Mammary epithelial cell (primary cell): ENCODE measurements at regions of chrX and their contacts with region 1.

Region 1: DNA sequence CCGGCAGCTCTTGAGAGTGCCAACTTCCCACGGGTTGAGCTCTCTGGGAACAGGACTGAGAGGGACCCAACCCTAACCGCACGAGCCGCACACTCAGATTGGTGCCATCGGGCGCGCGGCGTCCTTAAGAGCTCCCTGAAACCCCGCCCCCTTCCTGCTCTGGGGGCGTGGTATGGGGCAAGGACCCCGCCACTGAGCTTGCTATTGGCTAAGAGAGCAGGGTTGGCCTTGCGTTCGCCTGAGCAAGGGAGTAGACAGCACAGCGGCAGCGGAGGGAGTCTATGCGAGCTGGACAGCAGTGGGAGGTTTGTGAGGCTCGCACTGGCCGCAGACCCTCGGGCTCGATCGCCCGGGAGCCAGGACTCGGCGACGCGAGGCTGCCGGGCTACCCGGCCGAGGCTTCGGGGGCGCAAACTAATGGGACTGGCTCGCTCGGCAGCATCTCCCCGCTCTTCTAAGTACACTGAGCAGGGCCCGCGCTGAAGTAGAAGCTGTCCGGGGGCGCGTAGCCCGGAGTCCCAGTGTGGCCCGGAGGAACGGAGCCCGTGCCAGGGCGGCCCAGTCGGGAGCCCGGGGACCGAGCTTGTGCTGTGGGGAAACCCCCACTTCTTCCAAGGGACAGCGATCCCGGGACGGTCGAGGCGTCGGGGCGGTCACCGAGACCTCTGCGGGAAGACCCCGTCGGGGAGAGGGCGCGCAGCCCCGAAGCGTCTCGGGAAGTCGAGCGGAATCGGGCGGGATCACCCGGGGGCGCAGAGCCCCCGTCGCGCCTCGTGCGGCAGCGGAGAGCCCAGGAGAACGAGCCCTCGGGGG is at the start of gene EFNB1:
- DNase-seq: peak; percentile 90
- H3K4me3 ChIP-seq: peak within 1 kb of the TSS; percentile 66 to 74 (median 74)
- H3K27ac ChIP-seq: peak within 1 kb of the TSS; percentile 81
- H3K4me1 ChIP-seq: peaks cover 5% of the 10 kb centered on the region
- H3K27me3 ChIP-seq: no peaks in the 10 kb centered on the region
- CTCF ChIP-seq: no peak
- total RNA-seq, gene EFNB1: 143 to 167 TPM

Region 2: GRCh38 chrX:68681443-68681941 is 147.5 kb before region 1 on chrX:
- CTCF ChIA-PET with region 1: no interaction called
- dilution Hi-C with region 1: no loop called
- in situ Hi-C with region 1: no loop called
- intact Hi-C with region 1: no loop called
- DNase-seq: peak; percentile 9
- H3K4me3 ChIP-seq: no peak overlapping the region
- H3K27ac ChIP-seq: no peak overlapping the region
- H3K4me1 ChIP-seq: peaks cover 3% of the 10 kb centered on the region
- H3K27me3 ChIP-seq: no peaks in the 10 kb centered on the region
- CTCF ChIP-seq: no peak

Region 3: GRCh38 chrX:68894513-68895340 is 65.8 kb after region 1 on chrX:
- CTCF ChIA-PET with region 1: no interaction called
- dilution Hi-C with region 1: no loop called
- in situ Hi-C with region 1: no loop called
- intact Hi-C with region 1: loop called (anchors 2 kb)
- DNase-seq: peak; percentile 33
- H3K4me3 ChIP-seq: no peak overlapping the region
- H3K27ac ChIP-seq: peak overlapping the region; percentile 37
- H3K4me1 ChIP-seq: peaks cover 18% of the 10 kb centered on the region
- H3K27me3 ChIP-seq: no peaks in the 10 kb centered on the region
- CTCF ChIP-seq: no peak

Region 4: DNA sequence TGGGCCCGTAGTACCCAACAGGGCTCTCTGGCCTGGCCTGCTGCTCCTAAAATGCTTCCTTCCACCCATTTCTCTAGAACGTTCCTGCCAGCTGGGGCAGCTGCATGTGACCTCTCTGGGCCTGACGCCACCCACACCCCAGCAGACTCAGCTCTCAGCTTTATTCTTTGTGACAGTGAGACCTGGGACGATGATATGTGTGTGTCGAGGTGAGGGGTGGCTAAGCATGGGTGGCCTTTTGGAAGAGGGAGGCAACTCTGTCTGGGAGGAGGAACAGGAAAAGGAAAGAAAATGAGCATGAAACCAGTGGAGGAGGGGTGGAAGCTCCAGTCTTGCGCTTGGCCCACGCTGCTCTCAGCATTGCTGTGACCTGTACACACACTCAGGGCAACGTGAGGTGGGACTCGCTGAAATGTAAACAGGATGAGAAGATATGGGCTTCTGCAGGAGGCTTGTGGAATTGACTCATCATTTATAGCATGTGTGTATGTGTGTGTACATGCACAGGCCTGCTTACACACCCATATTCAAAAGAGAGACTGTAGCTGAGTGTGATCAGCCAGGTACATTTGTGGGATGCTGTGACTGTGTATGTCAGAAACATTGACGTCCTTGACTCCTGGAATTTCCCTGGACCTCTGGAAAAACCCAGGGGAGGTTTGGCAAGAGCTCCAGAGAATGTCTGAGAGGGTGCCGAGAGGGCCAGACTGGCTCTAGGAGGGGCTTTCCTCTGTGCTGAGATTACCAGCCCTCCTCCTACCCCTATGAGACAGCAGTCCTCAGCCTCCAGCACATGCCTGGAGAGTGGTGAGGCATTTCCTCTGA is 198.4 kb after region 1 on chrX:
- CTCF ChIA-PET with region 1: interaction called, 8 read pairs
- dilution Hi-C with region 1: no loop called
- in situ Hi-C with region 1: loop called (anchors 5 to 10 kb)
- intact Hi-C with region 1: loop called (anchors 1 kb)
- DNase-seq: peak; percentile 97
- H3K4me3 ChIP-seq: no peak overlapping the region
- H3K27ac ChIP-seq: peak overlapping the region; percentile 96
- H3K4me1 ChIP-seq: peaks cover 53% of the 10 kb centered on the region
- H3K27me3 ChIP-seq: no peaks in the 10 kb centered on the region
- CTCF ChIP-seq: no peak

Region 5: DNA sequence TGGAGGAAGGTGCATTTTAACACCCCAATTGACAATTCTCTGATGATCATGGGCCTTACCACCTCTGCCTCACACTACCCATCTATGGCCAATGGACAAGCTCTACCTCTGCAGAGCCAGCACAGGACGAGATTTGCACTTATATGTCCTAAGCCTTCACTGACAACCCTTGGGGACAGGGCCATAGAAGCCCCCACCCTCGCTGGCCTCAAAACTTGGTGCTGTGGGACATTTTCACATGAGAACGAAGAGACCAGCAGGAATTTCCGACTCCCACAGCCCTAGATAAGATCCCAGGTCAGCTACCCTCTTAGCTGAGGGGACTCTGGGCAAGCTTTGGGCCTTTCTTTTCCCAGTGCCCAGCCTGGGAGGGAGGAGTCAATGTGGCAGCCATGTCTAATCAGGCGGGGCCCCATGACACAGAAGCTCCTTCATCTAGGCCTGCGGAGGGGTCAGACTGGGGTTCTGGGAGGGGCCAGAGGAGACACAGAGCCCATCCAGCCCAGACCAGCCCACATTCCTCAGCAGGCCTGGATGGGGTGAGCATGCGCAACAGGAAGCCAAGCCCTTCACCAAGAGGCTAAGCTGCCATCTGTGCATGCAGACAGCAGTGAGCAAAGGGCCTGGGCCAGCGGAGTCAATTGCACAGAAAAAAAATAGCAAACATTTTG is 324.2 kb after region 1 on chrX:
- CTCF ChIA-PET with region 1: interaction called, 8 read pairs
- dilution Hi-C with region 1: no loop called
- in situ Hi-C with region 1: loop called in 1 of 2 experiments (anchors 25 kb)
- intact Hi-C with region 1: loop called (anchors 5 kb)
- DNase-seq: no peak
- H3K4me3 ChIP-seq: no peak overlapping the region
- H3K27ac ChIP-seq: no peak overlapping the region
- H3K4me1 ChIP-seq: peaks cover 21% of the 10 kb centered on the region
- H3K27me3 ChIP-seq: no peaks in the 10 kb centered on the region
- CTCF ChIP-seq: no peak

Region 6: GRCh38 chrX:69229436-69229835 is 400.5 kb after region 1 on chrX:
- CTCF ChIA-PET with region 1: no interaction called
- dilution Hi-C with region 1: no loop called
- in situ Hi-C with region 1: loop called in 1 of 2 experiments (anchors 5 kb)
- intact Hi-C with region 1: no loop called
- DNase-seq: peak; percentile 69
- H3K4me3 ChIP-seq: no peak overlapping the region
- H3K27ac ChIP-seq: no peak overlapping the region
- H3K4me1 ChIP-seq: peaks cover 6% of the 10 kb centered on the region
- H3K27me3 ChIP-seq: no peaks in the 10 kb centered on the region
- CTCF ChIP-seq: no peak

Region 7: DNA sequence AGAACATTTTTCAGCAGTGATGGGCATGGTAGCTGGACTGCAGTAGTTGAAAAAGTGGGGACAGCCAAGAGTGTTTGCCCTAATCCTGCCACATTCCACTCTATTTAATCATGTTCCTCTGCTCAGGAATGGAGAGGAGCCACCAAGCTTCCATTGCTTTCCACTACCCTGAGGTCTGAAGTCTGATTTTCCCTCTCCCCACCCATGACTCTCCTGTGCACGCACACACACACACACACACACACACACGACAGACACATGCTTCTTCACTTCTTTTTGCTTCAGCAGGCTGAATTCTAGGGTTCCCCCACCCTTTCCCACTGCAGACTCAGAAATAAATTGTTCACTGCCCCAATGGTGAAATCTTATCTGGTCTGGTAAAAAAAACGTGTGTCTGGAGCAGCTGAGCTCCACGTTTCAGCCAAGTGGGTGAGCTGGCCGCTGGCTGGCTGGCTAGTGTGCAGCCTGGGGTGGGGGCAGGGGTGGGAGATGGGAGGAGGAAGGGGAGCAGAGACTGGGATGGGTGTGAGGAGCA is 532.4 kb after region 1 on chrX:
- CTCF ChIA-PET with region 1: interaction called, 13 read pairs
- dilution Hi-C with region 1: no loop called
- in situ Hi-C with region 1: no loop called
- intact Hi-C with region 1: no loop called
- DNase-seq: peak; percentile 3
- H3K4me3 ChIP-seq: no peak overlapping the region
- H3K27ac ChIP-seq: no peak overlapping the region
- H3K4me1 ChIP-seq: peaks cover 2% of the 10 kb centered on the region
- H3K27me3 ChIP-seq: no peaks in the 10 kb centered on the region
- CTCF ChIP-seq: no peak